ENCODE measurements at regions of chr5 and their contacts with region 1.

Region 1: DNA sequence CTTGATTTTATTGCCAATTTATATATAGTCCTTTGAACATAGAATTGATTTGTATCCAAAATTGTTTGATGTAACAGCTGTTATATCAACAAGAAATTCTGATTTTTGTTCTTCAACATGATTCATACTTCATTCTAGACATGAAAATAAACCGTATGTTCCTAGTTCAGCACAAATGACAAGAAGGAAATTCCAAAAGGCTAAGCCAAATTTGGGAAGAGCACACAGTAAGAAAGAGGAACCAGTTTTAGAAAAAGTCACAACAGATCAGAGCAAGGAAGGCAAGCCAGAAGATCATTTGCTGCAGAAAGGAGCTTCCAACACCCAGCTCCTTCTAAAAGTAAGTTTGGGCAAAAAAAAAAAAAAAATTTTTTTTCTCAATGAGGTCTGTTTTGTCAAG is 65.0 kb upstream of the MCCC2 start:
- DNase-seq: no peak
- ATAC-seq: no peak
- H3K4me3 ChIP-seq: no peak overlapping the region
- H3K27ac ChIP-seq: no peak overlapping the region
- H3K4me1 ChIP-seq: no peaks in the 10 kb centered on the region
- H3K27me3 ChIP-seq: no peaks in the 10 kb centered on the region
- CTCF ChIP-seq: no peak
- POLR2A ChIP-seq: no peak

Region 2: DNA sequence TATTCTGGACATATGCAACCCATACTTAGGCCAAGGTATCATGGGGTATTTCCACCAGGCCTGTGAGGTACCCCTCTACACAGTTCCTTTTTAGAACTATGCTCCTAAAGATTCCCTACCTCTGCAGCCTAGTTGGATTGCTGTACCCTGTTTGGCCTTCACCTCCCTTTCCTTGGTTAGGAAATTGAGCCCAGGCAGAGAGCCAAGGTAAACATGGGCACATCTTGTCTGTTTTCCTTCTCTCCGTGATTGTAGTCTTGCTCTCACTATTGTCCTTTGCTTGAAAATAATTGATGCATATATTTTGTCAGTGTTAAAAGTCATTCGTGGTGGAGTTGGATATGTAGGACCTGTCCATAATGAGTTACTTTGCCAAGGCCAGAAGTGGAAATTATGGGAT is 40.0 kb before region 1 on chr5:
- intact Hi-C with region 1: loop called in 1 of 10 experiments (anchors 5 kb)
- DNase-seq: no peak
- ATAC-seq: peak in 1 of 4 donors; percentile 24
- H3K4me3 ChIP-seq: no peak overlapping the region
- H3K27ac ChIP-seq: no peak overlapping the region
- H3K4me1 ChIP-seq: peaks cover 0 to 11% (median 7%) of the 10 kb centered on the region in 12 donors
- H3K27me3 ChIP-seq: no peaks in the 10 kb centered on the region
- CTCF ChIP-seq: no peak
- POLR2A ChIP-seq: no peak

Region 3: GRCh38 chr5:71573592-71573991 is 51.4 kb after region 1 on chr5:
- intact Hi-C with region 1: loop called in 1 of 10 experiments (anchors 10 kb)
- DNase-seq: no peak
- ATAC-seq: peak; percentile 68 to 85 (median 82)
- H3K4me3 ChIP-seq: no peak overlapping the region
- H3K27ac ChIP-seq: no peak overlapping the region
- H3K4me1 ChIP-seq: peaks cover 0 to 8% (median 0%) of the 10 kb centered on the region in 12 donors
- H3K27me3 ChIP-seq: no peaks in the 10 kb centered on the region
- CTCF ChIP-seq: peak in 9 of 12 donors; percentile 5 to 38 (median 27)
- POLR2A ChIP-seq: no peak

Region 4: DNA sequence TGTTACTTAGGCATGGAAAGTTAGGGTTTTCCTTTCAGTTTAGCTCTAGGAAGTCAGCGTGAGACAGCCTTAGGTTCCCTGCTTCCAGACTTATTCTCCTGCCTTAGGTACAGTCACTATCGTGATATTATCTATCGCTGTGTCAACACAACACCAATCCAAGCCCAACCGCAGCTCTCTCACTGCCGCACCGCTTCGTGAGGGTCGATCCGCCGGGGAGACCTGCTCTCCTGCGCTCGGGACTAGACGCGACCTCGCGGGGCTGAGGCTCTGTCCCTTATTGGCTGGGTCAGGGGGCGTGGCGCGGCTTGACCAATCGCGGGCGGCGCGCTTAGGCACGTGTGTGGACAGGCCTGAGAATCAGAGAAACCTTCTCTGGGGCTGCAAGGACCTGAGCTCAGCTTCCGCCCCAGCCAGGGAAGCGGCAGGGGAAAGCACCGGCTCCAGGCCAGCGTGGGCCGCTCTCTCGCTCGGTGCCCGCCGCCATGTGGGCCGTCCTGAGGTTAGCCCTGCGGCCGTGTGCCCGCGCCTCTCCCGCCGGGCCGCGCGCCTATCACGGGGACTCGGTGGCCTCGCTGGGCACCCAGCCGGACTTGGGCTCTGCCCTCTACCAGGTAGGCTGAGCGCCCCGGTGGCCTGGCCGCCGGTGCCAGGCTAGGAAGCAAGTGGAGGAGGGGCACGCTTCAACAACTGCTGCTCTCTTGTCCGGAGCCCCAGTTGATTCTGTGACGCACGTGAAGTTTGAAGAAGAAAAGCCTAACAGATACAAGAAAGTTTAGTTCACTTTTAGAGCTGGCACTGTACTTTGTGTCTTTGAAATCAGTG is 65.0 kb after region 1 on chr5 and contains the start of gene MCCC2:
- intact Hi-C with region 1: no loop called
- DNase-seq: peak; percentile 96 to 99 (median 97)
- ATAC-seq: peak; percentile 99 to 100 (median 100)
- H3K4me3 ChIP-seq: peak within 1 kb of the TSS; percentile 49 to 94 (median 74)
- H3K27ac ChIP-seq: peak within 1 kb of the TSS; percentile 29 to 92 (median 84)
- H3K4me1 ChIP-seq: peaks cover 0 to 40% (median 22%) of the 10 kb centered on the region in 12 donors
- H3K27me3 ChIP-seq: no peaks in the 10 kb centered on the region
- CTCF ChIP-seq: peak in 1 of 12 donors; percentile 8
- POLR2A ChIP-seq: peak in 1 of 2 donors; percentile 76
- total RNA-seq, gene MCCC2: 85.3 to 153 (median 106) TPM

Measured in heart left ventricle (tissue), 16 donors.